Activated T-helper 1 cell treated with anti-CD3 and anti-CD28 coated beads, Interleukin-12 subunit alpha, Interleukin-12 subunit beta, Interleukin-2, Interleukin-4 antibody, amounts not matched to agents 30 ng/mL and 10 ng/mL and 1 ng/mL, durations not matched to agents 14 hours and 24 hours and 36 hours (primary cell): ENCODE measurements at regions of chr15 and their contacts with region 1.

Region 1: GRCh38 chr15:45402162-45402954 is 24.0 kb upstream of the GATM start:
- DNase-seq: peak; percentile 92
- H3K4me3 Mint-ChIP-seq: peak overlapping the region; percentile 94
- H3K27ac Mint-ChIP-seq: peak overlapping the region; percentile 84
- H3K4me1 Mint-ChIP-seq: peaks cover 40% of the 10 kb centered on the region
- H3K27me3 Mint-ChIP-seq: peaks cover 4% of the 10 kb centered on the region

Region 2: DNA sequence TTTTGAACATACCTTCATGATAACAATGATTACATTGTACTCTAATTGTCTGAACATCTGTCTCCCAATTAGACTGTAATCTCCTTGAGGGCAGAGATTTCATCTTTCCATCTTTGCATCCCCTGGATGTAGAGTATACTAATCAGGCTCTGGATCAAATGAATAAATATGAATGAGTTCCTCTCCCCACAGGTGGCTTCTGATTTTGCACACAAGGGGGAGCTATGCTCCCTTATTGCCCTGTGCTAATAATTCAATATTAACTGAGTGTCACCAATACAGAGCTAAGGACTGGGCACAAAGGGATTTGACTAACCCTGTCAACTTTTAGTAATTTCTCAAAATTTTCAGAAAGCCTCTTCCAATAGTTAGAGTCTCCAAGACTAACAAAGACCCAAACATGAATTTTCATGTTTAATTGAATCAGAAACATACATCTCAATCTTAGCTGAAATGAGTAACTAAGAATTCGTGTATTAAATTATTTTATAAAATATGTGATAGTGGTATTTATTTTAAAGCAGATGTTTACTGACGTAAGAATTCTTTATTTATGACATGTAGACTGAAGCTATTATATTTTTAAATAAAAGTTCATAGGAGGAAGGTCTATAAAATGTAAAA is 275.7 kb before region 1 on chr15:
- intact Hi-C with region 1: loop called (anchors 1 kb)
- DNase-seq: no peak
- H3K4me3 Mint-ChIP-seq: no peak overlapping the region
- H3K27ac Mint-ChIP-seq: no peak overlapping the region
- H3K4me1 Mint-ChIP-seq: no peaks in the 10 kb centered on the region
- H3K27me3 Mint-ChIP-seq: peaks cover 64% of the 10 kb centered on the region

Region 3: GRCh38 chr15:45205192-45205591 is 197.2 kb before region 1 on chr15:
- intact Hi-C with region 1: loop called (anchors 1 kb)
- DNase-seq: peak; percentile 50
- H3K4me3 Mint-ChIP-seq: no peak overlapping the region
- H3K27ac Mint-ChIP-seq: peak overlapping the region; percentile 53
- H3K4me1 Mint-ChIP-seq: peaks cover 9% of the 10 kb centered on the region
- H3K27me3 Mint-ChIP-seq: peaks cover 18% of the 10 kb centered on the region

Region 4: GRCh38 chr15:45285413-45285812 is 116.9 kb before region 1 on chr15:
- intact Hi-C with region 1: no loop called
- DNase-seq: no peak
- H3K4me3 Mint-ChIP-seq: no peak overlapping the region
- H3K27ac Mint-ChIP-seq: no peak overlapping the region
- H3K4me1 Mint-ChIP-seq: no peaks in the 10 kb centered on the region
- H3K27me3 Mint-ChIP-seq: peaks cover 18% of the 10 kb centered on the region

Region 5: DNA sequence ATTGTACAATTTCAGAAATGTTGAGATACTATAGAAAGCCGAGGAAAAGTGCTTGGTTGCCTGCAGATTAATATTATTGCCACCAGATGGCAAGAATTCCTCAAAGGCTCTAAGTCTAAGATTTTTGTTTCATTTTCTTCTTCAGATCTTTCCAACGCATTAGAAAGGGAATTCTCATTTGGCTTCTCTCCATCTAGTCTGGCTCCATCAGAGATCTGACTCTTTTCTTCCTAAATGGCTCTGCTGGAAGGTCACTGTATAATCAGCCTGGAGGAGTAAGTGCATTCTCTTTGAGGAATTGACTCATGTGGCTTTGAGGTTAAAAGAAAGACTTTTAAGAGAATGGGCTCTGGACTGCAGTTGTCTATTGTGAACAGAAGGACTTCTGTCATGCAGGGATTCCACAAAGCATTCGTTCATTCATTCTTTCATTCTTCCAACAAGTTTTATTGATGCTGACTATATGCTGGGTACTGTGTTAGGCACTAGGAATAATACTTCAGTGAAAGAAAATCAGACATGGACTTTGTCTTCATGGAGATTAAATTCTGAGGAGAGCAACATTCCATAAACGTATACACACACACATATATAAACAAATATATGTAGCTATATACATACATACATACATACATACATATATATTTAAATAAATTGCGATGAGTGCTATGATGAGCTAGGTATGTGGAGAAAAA is 95.0 kb before region 1 on chr15:
- intact Hi-C with region 1: loop called (anchors 1 kb)
- DNase-seq: no peak
- H3K4me3 Mint-ChIP-seq: no peak overlapping the region
- H3K27ac Mint-ChIP-seq: no peak overlapping the region
- H3K4me1 Mint-ChIP-seq: peaks cover 5% of the 10 kb centered on the region
- H3K27me3 Mint-ChIP-seq: peaks cover 27% of the 10 kb centered on the region

Region 6: DNA sequence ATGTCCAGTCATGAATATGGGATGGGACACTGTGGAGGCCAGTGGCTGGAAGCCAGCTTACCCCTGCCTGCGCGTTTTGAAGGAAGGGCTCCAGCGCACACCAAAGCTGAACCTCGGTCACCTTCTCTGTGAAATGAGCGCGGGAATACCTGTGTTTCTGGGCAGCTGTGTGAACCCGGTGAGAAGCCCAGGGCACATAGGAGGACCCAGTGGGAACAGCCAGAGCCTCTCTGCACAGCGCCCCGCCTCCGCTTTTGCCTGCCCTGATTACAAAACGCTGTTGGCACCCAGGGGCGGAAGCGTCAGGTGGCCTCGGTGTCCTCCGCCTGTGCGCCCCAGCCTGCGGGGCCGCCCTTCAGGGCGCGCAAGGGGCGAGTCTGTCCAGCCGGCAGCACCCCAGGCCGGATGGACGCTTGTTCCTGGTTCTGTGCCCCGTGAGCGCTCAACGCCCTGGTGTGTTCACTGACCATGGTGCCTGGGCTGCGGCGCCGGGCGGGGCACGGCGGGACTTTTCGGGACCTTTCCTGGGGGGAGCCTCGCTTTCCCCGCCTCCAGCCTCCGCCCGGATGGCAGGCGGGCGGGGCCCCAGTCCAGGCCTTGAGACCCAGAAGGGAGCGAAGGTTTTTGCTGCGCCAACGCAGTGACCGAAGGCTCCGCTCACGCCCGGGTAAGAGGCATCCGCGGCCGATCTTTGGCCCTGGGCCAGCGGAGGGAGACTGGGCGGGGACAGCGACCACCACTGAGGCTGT is 232.3 kb after region 1 on chr15 and contains the start of gene SQOR:
- intact Hi-C with region 1: loop called (anchors 1 kb)
- DNase-seq: peak; percentile 67
- H3K4me3 Mint-ChIP-seq: peak within 1 kb of the TSS; percentile 99
- H3K27ac Mint-ChIP-seq: peak within 1 kb of the TSS; percentile 94
- H3K4me1 Mint-ChIP-seq: peaks cover 50% of the 10 kb centered on the region
- H3K27me3 Mint-ChIP-seq: peaks cover 16% of the 10 kb centered on the region
- total RNA-seq, gene SQOR: 96.0 and 100 TPM in 2 replicates